ENCODE measurements at regions of chr7 and their contacts with region 1.

Region 1: DNA sequence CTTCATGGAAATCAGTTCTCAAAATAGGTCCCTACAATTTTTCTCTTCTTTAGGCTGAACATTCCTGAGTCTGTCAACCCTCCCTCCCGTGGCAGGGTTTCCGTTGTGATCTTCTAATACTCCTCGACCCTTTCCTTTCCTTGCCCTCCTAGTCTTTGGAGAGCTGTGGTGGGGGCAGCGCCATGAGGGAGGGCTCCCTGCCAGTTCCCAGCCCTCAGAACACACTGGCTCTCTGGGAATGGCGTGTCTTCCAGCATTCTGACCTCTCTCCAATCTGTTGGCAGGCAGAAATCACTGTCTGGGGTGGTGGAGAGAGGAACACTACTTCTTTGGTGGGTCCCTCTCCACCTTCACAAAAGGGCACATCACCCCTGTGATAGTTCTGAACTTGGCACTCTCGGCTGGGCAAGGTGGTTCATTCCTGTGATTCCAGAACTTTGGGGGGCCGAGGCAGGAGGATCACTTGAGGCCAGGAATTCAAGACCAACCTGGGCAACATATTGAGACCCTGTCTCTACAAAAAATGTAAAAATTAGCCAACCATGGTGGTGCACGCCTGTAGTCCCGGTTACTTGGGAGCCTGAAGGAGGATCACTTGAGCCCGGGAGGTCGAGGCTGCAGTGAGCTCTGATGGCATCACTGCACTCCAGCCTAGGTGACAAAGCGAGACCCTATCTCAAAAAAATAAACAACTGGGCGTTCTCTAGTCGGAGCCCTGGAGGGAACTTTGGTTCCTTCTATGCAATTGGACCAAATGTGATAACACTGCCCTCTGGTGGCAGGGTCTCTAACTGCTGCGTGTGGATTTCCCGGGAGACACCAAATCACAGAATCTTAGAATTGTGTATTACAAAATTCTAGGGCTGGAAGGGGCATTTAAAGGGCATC is 13.1 kb upstream of the ARPC1A start:
- DNase-seq: peak; percentile 61 to 75
- ATAC-seq: peak; percentile 81 to 86
- H3K4me3 ChIP-seq: no peak overlapping the region
- H3K27ac ChIP-seq: peak overlapping the region; percentile 32 to 60; a peak in 3 of 6 replicates
- H3K4me1 ChIP-seq: no peaks in the 10 kb centered on the region
- CTCF ChIP-seq: peak; percentile 97
- EP300 ChIP-seq: no peak
- POLR2A ChIP-seq: no peak
- RAD21 ChIP-seq: peak; percentile 97

Region 2: GRCh38 chr7:98930921-98931320 is 381.6 kb before region 1 on chr7:
- CTCF ChIA-PET with region 1: no interaction called
- POLR2A ChIA-PET with region 1: no interaction called
- DNase-seq: no peak
- ATAC-seq: no peak
- H3K4me3 ChIP-seq: no peak overlapping the region
- H3K27ac ChIP-seq: no peak overlapping the region
- H3K4me1 ChIP-seq: no peaks in the 10 kb centered on the region
- CTCF ChIP-seq: no peak
- EP300 ChIP-seq: no peak
- POLR2A ChIP-seq: no peak
- RAD21 ChIP-seq: no peak

Region 3: DNA sequence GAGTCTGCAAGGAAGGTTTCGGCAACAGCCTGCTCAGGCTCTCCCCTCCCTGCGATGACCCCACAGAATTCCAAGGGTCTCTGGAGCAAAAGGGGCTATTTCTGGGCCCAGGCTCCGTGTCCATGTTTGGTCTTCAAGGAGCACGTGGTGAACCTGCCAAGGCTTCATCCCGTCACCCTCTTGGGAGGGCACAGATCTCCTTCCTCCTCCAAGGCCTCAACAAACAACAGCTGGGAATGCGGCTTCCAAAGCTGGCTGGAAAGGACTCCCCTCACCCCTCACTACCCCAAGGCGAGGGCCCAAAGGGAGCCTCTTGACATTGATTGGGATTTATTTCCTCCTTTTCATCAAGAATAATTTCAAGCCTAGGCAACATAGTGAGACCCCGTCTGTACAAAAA is 90.7 kb before region 1 on chr7:
- CTCF ChIA-PET with region 1: interaction called, 11 read pairs
- POLR2A ChIA-PET with region 1: no interaction called
- DNase-seq: no peak
- ATAC-seq: no peak
- H3K4me3 ChIP-seq: no peak overlapping the region
- H3K27ac ChIP-seq: peak overlapping the region; percentile 17 to 36; a peak in 3 of 6 replicates
- H3K4me1 ChIP-seq: peaks cover 35% of the 10 kb centered on the region
- CTCF ChIP-seq: no peak
- EP300 ChIP-seq: no peak
- POLR2A ChIP-seq: no peak
- RAD21 ChIP-seq: no peak

Region 4: GRCh38 chr7:99278177-99278576 is 34.4 kb before region 1 on chr7:
- CTCF ChIA-PET with region 1: interaction called, 20 read pairs
- POLR2A ChIA-PET with region 1: no interaction called
- DNase-seq: no peak
- ATAC-seq: peak in 1 of 2 experiments; percentile 15; a peak in 1 of 6 replicates
- H3K4me3 ChIP-seq: no peak overlapping the region
- H3K27ac ChIP-seq: no peak overlapping the region
- H3K4me1 ChIP-seq: peaks cover 16% of the 10 kb centered on the region
- CTCF ChIP-seq: no peak
- EP300 ChIP-seq: no peak
- POLR2A ChIP-seq: no peak
- RAD21 ChIP-seq: no peak

Region 5: DNA sequence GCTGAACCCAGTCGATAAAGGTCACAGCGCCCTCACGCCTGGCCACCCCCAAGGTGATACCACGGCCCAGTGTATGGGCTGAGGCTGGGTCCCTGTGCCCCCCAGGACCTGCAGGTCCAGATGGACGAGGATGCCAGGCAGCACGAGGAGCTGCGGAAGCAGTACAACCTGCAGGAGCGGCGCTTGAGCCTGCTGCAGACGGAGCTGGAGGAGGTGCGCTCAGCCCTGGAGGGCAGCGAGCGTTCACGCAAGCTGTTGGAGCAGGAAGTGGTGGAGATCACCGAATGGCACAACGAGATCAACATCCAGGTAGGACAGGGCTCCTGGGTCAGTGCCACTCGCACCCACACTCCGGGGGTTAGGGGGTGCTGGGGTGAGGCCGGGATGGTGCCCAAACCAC is 11.1 kb before region 1 on chr7:
- CTCF ChIA-PET with region 1: interaction called, 17 read pairs
- POLR2A ChIA-PET with region 1: no interaction called
- DNase-seq: no peak
- ATAC-seq: no peak
- H3K4me3 ChIP-seq: no peak overlapping the region
- H3K27ac ChIP-seq: no peak overlapping the region
- H3K4me1 ChIP-seq: no peaks in the 10 kb centered on the region
- CTCF ChIP-seq: no peak
- EP300 ChIP-seq: no peak
- POLR2A ChIP-seq: no peak
- RAD21 ChIP-seq: no peak